Mammary epithelial cell (primary cell): ENCODE measurements at regions of chr6 and their contacts with region 1.

Region 1: GRCh38 chr6:116287689-116288282 is 8.1 kb upstream of the TSPYL1 start:
- DNase-seq: no peak
- H3K4me3 ChIP-seq: no peak overlapping the region
- H3K27ac ChIP-seq: no peak overlapping the region
- H3K4me1 ChIP-seq: no peaks in the 10 kb centered on the region
- H3K27me3 ChIP-seq: no peaks in the 10 kb centered on the region
- CTCF ChIP-seq: peak; percentile 88 to 96

Region 2: GRCh38 chr6:116027801-116028200 is 260.0 kb before region 1 on chr6:
- CTCF ChIA-PET with region 1: no interaction called
- dilution Hi-C with region 1: no loop called
- in situ Hi-C with region 1: no loop called
- intact Hi-C with region 1: no loop called
- DNase-seq: peak; percentile 35
- H3K4me3 ChIP-seq: no peak overlapping the region
- H3K27ac ChIP-seq: no peak overlapping the region
- H3K4me1 ChIP-seq: peaks cover 9% of the 10 kb centered on the region
- H3K27me3 ChIP-seq: no peaks in the 10 kb centered on the region
- CTCF ChIP-seq: no peak

Region 3: DNA sequence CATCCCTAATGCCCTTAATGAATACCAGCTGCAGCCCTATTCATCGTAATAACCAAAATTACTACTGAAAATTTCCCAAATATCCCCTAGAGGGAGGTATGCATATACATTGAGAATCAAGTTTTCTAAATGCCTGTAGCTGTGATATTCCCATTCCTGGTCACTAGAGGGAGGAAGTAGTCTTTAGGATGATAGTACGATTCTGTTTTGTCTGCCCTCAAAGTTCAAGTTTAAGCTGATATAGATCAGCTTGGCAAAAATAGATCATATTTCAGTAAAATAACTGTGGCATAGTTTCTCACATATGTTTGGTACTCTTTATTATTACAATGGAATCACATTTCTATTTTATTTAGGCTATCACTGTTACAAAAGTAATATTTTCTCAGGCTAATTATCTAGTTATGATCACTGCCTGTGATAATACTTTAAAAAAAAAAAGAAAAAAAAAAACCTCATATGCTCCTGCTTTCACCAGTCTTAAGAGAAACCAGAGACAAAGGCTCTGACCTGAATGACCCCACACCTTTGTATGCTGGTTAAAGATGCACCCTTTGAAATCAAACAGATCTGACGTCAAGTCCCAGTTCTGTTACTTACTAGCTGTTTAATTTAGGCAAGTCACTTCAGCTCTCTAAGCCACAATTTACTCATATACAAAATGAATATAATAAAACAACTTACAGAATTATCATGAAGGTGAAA is 19.0 kb before region 1 on chr6:
- CTCF ChIA-PET with region 1: interaction called, 10 read pairs
- dilution Hi-C with region 1: no loop called
- in situ Hi-C with region 1: no loop called
- intact Hi-C with region 1: no loop called
- DNase-seq: peak; percentile 68
- H3K4me3 ChIP-seq: no peak overlapping the region
- H3K27ac ChIP-seq: no peak overlapping the region
- H3K4me1 ChIP-seq: peaks cover 33% of the 10 kb centered on the region
- H3K27me3 ChIP-seq: no peaks in the 10 kb centered on the region
- CTCF ChIP-seq: peak; percentile 93 to 98

Region 4: GRCh38 chr6:116405138-116405537 is 117.4 kb after region 1 on chr6:
- CTCF ChIA-PET with region 1: interaction called, 3 read pairs
- dilution Hi-C with region 1: no loop called
- in situ Hi-C with region 1: loop called in 1 of 2 experiments (anchors 25 kb)
- intact Hi-C with region 1: loop called (anchors 1 kb)
- DNase-seq: no peak
- H3K4me3 ChIP-seq: no peak overlapping the region
- H3K27ac ChIP-seq: no peak overlapping the region
- H3K4me1 ChIP-seq: peaks cover 7% of the 10 kb centered on the region
- H3K27me3 ChIP-seq: no peaks in the 10 kb centered on the region
- CTCF ChIP-seq: no peak

Region 5: DNA sequence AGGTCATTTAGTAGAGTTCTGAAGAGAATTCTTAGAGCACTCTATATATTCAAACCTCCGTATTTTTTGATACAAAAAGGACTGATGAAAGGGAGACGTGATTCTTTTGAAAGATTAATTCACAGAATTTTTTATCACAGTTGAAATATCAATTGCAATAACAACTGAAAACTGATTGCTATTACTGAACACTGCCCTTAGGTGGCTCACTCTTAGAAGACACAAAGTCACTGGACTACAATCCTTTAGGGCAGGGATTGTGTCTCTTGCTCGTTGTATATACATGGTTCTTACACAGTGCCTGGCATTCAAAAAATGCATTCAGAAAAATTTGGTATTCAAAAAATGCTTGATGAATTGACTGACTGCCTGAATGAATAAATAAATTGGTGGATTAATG is 156.3 kb after region 1 on chr6:
- CTCF ChIA-PET with region 1: no interaction called
- dilution Hi-C with region 1: no loop called
- in situ Hi-C with region 1: no loop called
- intact Hi-C with region 1: loop called (anchors 2 kb)
- DNase-seq: peak; percentile 27
- H3K4me3 ChIP-seq: no peak overlapping the region
- H3K27ac ChIP-seq: no peak overlapping the region
- H3K4me1 ChIP-seq: peaks cover 28% of the 10 kb centered on the region
- H3K27me3 ChIP-seq: no peaks in the 10 kb centered on the region
- CTCF ChIP-seq: peak; percentile 47 to 63

Region 6: GRCh38 chr6:116561377-116562018 is 273.7 kb after region 1 on chr6:
- CTCF ChIA-PET with region 1: interaction called, 4 read pairs
- dilution Hi-C with region 1: no loop called
- in situ Hi-C with region 1: no loop called
- intact Hi-C with region 1: loop called (anchors 1 kb)
- DNase-seq: peak; percentile 58
- H3K4me3 ChIP-seq: no peak overlapping the region
- H3K27ac ChIP-seq: no peak overlapping the region
- H3K4me1 ChIP-seq: peaks cover 29% of the 10 kb centered on the region
- H3K27me3 ChIP-seq: no peaks in the 10 kb centered on the region
- CTCF ChIP-seq: peak; percentile 84 to 96

Region 7: GRCh38 chr6:117126213-117126612 is 838.4 kb after region 1 on chr6:
- CTCF ChIA-PET with region 1: no interaction called
- dilution Hi-C with region 1: no loop called
- in situ Hi-C with region 1: no loop called
- intact Hi-C with region 1: no loop called
- DNase-seq: no peak
- H3K4me3 ChIP-seq: no peak overlapping the region
- H3K27ac ChIP-seq: no peak overlapping the region
- H3K4me1 ChIP-seq: no peaks in the 10 kb centered on the region
- H3K27me3 ChIP-seq: no peaks in the 10 kb centered on the region
- CTCF ChIP-seq: no peak